Left ventricle myocardium superior (tissue), 1 donor: ENCODE measurements at regions of chr5 and their contacts with region 1.

Region 1: DNA sequence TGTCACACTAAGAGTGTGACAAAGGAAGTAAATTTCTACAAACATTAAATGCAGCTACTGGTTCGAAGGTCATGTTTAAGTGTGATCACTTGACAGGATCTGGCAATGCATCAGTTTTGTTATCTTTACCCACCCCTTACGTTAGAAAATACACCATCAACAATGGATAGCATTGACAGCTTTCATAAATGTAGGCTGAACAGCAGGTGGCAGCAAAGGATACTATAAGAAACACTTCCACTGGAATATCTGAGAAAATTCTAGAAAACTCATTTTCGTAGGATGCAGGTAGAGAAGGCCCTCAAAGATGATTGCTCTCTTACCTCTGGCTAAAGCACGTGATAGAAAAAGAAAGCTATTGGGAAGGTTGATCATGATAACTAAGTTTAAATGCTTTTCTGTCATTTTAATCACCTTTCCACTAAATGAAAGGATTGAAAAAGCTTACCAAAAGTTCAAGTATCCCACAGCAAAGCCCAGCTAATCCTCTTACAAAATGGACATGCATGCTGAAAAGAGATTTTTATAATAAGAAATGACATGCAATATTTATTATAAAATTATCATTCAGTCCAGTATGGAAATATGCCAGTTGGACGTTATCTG is 292.5 kb downstream of the PARP8 start:
- DNase-seq: no peak
- ATAC-seq: no peak

Region 2: GRCh38 chr5:51242453-51242852 is 283.5 kb after region 1 on chr5:
- intact Hi-C with region 1: no loop called
- DNase-seq: no peak
- ATAC-seq: no peak

Region 3: DNA sequence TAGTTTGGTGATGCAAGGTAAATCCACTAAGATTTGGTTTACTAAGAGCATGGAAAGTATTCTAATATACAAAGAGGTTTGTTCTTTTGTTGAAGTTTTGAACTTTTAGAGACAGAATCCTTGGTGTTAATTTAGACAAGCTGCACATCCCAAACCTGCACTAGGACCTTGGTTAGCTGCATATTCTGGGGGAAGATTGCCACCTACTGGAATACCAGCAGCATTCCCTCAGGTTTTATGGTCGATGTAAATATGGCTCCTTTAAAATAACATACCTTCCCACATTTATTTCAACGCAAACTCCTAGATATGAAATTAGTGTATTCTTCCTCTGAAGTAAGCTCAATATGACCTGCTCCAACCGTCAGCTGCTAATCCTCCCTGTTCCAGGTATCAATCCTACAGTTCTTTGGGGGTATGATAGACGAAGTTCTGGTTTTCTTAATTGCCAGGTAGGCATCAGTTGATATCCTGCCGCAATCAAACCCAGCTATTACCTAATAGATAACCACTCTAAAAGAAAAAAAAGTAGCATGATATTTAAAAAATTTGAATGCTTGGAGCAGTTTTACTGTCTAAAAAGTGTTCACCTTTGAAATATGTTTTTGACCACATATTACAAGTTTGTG is 1048.4 kb after region 1 on chr5:
- intact Hi-C with region 1: loop called (anchors 10 kb)
- DNase-seq: no peak
- ATAC-seq: no peak

Region 4: GRCh38 chr5:52657247-52657645 is 1698.3 kb after region 1 on chr5:
- intact Hi-C with region 1: loop called (anchors 10 kb)
- DNase-seq: no peak
- ATAC-seq: no peak